Activated naive CD4-positive, alpha-beta T cell treated with anti-CD3 and anti-CD28 coated beads for 36 hours (primary cell): ENCODE measurements at regions of chr19 and their contacts with region 1.

Region 1: GRCh38 chr19:2618611-2619010 is 83.9 kb downstream of the GNG7 start:
- DNase-seq: peak; percentile 97
- H3K4me3 Mint-ChIP-seq: peak overlapping the region; percentile 53
- H3K27ac Mint-ChIP-seq: peak overlapping the region; percentile 91
- H3K4me1 Mint-ChIP-seq: peaks cover 72% of the 10 kb centered on the region
- H3K27me3 Mint-ChIP-seq: no peaks in the 10 kb centered on the region

Region 2: DNA sequence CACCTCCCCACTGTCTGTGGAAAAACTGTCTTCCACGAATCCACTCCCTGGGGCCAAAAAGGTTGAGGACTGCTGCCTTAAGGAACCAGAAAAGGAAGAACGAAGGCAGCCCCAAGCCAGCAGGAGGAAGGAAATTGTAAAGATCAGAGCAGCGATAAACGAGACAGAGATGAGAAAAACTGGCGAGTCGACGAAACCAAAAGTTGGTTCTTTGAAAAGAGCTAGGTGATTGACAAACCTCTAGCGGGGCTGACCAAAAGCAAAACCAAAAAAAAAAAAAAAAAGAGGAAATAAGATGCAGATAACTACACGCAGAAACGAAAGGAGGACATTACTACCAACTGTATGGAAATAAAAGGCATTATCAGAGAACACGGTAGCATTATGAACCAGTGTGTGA is 65.8 kb before region 1 on chr19:
- CTCF ChIA-PET with region 1: interaction called, 4 read pairs
- intact Hi-C with region 1: loop called (anchors 1 kb)
- DNase-seq: peak; percentile 78
- H3K4me3 Mint-ChIP-seq: peak overlapping the region; percentile 64
- H3K27ac Mint-ChIP-seq: peak overlapping the region; percentile 81
- H3K4me1 Mint-ChIP-seq: peaks cover 17% of the 10 kb centered on the region
- H3K27me3 Mint-ChIP-seq: no peaks in the 10 kb centered on the region